ENCODE measurements at regions of chr3 and their contacts with region 1.

Region 1: GRCh38 chr3:32947789-32948238 is 3.6 kb upstream of the CCR4 start:
- H3K4me3 Mint-ChIP-seq: no peak overlapping the region
- H3K27ac Mint-ChIP-seq: no peak overlapping the region
- H3K4me1 Mint-ChIP-seq: peaks cover 6% of the 10 kb centered on the region
- H3K27me3 Mint-ChIP-seq: no peaks in the 10 kb centered on the region

Region 2: GRCh38 chr3:33063651-33064051 is 115.8 kb after region 1 on chr3:
- intact Hi-C with region 1: loop called (anchors 1 kb)
- H3K4me3 Mint-ChIP-seq: no peak overlapping the region
- H3K27ac Mint-ChIP-seq: peak overlapping the region; percentile 45
- H3K4me1 Mint-ChIP-seq: peaks cover 43% of the 10 kb centered on the region
- H3K27me3 Mint-ChIP-seq: no peaks in the 10 kb centered on the region

Region 3: DNA sequence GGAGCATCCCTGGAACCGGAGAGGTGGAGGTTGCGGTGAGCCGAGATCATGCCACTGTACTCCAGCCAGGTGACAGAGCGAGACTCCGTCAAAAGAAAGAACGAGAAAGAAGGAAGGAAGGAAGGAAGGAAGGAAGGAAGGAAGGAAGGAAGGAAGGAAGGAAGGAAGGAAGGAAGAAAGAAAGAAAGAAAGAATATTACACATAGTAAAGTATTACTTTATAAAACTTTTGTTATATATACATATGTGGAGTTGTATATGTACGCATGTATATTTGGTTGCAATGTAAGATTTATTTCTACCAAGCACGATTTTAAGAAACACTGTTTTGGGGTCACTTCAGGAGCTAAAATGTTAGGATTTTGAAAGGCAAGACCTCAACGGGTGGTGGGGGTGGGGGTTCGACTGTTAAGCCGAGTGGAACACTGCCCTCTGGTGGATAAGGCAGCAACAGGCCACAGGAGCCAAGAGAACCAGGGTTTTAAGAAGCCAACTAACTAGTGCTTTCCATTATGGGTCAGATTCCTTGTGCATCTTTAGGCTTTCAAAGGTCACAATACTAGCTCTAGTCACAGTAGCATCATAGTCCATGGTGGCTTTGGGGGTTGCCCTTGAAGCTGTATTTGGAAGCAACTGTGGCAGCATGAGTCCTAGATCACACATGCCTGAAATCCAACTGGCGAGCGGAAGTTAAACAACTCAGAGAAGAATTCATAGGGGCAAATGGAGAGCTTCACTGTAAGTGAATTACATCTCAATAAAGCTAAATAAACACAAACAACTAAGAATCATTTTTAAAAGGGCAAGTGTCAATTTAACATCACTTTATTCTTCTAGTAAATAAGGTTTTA is 126.6 kb after region 1 on chr3:
- intact Hi-C with region 1: loop called (anchors 1 kb)
- H3K4me3 Mint-ChIP-seq: no peak overlapping the region
- H3K27ac Mint-ChIP-seq: peak overlapping the region; percentile 64
- H3K4me1 Mint-ChIP-seq: peaks cover 55% of the 10 kb centered on the region
- H3K27me3 Mint-ChIP-seq: no peaks in the 10 kb centered on the region

Region 4: DNA sequence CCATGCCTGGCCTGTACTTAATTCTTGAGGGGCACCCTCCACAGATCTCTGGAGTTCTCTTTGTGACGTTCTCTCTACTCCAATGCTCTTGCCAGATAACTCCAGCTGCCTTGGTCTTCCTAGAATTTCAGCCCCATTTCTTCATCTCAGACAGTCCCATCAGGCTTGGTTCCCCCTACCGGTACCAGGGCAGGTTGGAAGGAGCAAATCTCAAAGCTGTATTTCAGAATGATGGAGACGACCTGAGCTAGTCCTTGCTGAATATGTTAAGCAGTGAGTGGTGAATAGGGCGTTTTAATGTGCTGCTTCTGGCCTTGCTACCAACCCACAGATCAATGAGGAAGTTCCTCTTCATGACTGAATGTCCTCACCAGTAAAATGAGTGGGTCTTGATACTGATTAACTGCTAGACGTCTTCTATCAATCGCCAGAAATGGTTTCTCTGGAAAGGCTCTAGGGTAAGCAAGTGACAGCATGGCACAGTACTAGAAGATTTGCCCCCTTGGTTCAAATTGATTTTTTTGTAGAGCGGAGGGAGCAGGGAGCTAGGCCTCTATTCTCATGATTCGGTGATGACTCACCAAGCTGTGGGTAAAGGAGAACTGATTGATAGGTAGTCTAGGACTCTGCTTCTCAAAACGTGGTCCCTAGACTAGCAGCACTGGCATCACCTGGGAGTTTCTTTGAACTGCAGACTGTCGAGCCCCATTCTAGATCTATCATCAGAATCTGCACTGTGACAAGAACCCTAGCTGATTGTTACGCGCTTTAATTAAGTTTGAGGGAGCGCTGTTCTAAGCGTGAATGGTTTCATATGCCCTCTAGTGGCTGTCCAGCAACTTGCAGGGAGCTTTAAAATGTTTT is 424.6 kb after region 1 on chr3:
- intact Hi-C with region 1: loop called (anchors 2 kb)
- H3K4me3 Mint-ChIP-seq: no peak overlapping the region
- H3K27ac Mint-ChIP-seq: no peak overlapping the region
- H3K4me1 Mint-ChIP-seq: peaks cover 13% of the 10 kb centered on the region
- H3K27me3 Mint-ChIP-seq: peaks cover 2% of the 10 kb centered on the region